Aorta (tissue), 5 donors: ENCODE measurements at regions of chr14 and their contacts with region 1.

Region 1: DNA sequence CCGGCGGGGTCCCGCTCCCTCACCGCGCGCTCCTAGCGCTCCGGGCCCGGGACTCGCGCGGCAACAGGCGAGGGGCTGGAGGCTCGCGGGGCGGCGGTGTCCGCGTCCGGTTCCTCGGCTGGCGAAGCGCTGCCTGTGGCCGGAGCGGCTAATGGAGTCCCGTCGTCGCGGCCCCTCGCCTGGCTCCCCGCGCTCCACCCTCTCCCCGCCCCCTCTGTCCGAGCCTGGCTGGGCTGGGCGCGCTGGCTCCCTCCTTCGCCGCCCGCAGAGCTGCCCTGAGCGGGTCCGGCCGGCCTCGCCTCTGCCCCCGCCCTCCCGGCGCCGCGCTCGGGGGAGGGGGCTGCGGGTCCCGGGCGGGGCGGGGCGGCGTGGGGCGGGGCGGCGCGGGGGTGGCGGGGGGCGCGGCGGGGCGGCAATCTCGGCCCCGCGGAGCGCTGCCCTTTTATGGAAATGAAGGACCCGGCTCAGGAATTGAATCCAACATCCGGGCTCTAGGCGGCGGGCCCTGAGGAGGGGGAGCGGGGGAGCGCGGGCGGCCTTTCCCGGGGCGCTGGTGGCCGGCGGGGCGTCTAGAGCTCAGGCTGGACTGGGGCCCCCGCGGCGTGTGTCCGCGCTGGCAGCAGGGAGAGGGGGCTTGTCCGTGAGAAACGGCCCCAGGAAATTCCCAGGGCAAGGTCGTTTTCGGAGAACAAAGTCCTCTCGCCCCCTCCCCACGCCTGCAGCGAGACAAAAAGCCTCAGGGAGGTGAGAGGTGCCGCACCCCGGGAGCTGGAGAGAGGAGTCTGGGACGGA is at the start of gene FERMT2:
- DNase-seq: peak; percentile 92 to 95
- ATAC-seq: peak; percentile 93
- H3K4me3 ChIP-seq: peak within 1 kb of the TSS; percentile 51 to 98
- H3K27ac ChIP-seq: peak within 1 kb of the TSS; percentile 87 to 100
- H3K4me1 ChIP-seq: peaks cover 0 to 5% of the 10 kb centered on the region in 2 donors
- H3K27me3 ChIP-seq: no peaks in the 10 kb centered on the region
- total RNA-seq, gene FERMT2: 205 to 310 TPM

Region 2: GRCh38 chr14:52801015-52801712 is 149.9 kb before region 1 on chr14:
- intact Hi-C with region 1: loop called in 1 of 2 experiments (anchors 5 kb)
- DNase-seq: peak; percentile 56 to 86
- ATAC-seq: peak; percentile 80
- H3K4me3 ChIP-seq: no peak overlapping the region
- H3K27ac ChIP-seq: peak overlapping the region; percentile 73 to 98
- H3K4me1 ChIP-seq: peaks cover 0 to 2% of the 10 kb centered on the region in 2 donors
- H3K27me3 ChIP-seq: no peaks in the 10 kb centered on the region

Region 3: DNA sequence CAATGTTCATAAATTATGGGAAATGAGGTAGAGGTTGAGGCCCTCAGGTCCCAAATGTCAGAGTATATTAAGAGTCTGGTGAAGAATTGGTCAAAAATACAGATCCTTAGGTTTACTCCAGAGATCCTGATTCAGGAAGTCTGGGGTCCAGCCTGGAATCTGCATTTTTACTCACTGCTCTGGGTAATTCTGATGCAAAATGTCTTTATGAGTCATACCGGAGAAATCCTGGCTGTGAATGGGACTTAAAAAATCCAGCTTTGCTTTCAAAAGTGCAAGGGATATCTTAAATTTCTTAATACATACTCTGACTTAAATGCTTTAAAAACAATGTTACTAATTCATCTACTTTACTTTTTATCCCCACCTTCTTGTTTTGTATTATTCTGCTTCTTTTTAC is 74.8 kb before region 1 on chr14:
- intact Hi-C with region 1: loop called (anchors 2 to 5 kb)
- DNase-seq: no peak
- ATAC-seq: no peak
- H3K4me3 ChIP-seq: no peak overlapping the region
- H3K27ac ChIP-seq: peak overlapping the region in 1 of 2 donors; percentile 57
- H3K4me1 ChIP-seq: peaks cover 0 to 2% of the 10 kb centered on the region in 2 donors
- H3K27me3 ChIP-seq: no peaks in the 10 kb centered on the region

Region 4: GRCh38 chr14:52895000-52895399 is 56.1 kb before region 1 on chr14:
- intact Hi-C with region 1: no loop called
- DNase-seq: no peak
- ATAC-seq: no peak
- H3K4me3 ChIP-seq: no peak overlapping the region
- H3K27ac ChIP-seq: no peak overlapping the region
- H3K4me1 ChIP-seq: peaks cover 2 to 4% of the 10 kb centered on the region in 2 donors
- H3K27me3 ChIP-seq: no peaks in the 10 kb centered on the region

Region 5: GRCh38 chr14:52906071-52906601 is 45.0 kb before region 1 on chr14:
- intact Hi-C with region 1: loop called (anchors 5 kb)
- DNase-seq: no peak
- ATAC-seq: no peak
- H3K4me3 ChIP-seq: no peak overlapping the region
- H3K27ac ChIP-seq: peak overlapping the region; percentile 82 to 97
- H3K4me1 ChIP-seq: peaks cover 5 to 18% of the 10 kb centered on the region in 2 donors
- H3K27me3 ChIP-seq: no peaks in the 10 kb centered on the region